ENCODE measurements at regions of chr1 and their contacts with region 1.

Region 1: GRCh38 chr1:40210514-40211204 is 37.1 kb upstream of the TMCO2 start:
- DNase-seq: no peak
- ATAC-seq: no peak
- H3K4me3 ChIP-seq: no peak overlapping the region
- H3K27ac ChIP-seq: no peak overlapping the region
- H3K4me1 ChIP-seq: no peaks in the 10 kb centered on the region
- H3K27me3 ChIP-seq: no peaks in the 10 kb centered on the region
- CTCF ChIP-seq: no peak
- POLR2A ChIP-seq: no peak

Region 2: DNA sequence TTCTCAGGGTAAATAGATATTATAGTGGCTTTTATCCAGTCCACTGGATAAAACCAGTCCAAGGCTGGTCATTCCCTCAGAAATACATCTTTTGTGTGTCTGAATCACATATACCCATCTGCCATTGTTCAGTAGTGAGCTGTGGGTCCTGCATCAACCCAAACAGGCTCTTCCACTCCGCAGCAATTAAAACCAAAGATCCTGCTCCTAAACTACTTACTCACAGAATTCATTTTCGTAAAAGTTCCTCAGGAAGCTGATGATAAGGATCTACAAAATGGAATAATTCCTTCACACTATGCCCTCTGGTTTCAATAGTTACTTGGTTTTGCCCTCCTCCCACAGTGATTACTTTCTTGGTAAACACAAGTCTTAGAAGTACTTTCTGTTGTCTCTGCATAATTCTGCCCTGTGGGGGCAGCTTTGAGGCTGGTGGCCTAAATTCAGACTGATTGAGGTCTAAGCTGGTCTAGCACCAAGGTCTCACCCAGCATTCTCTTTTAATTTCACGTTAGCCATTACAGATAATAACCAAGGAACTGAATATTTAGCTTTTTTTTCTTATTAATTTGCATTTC is 260.7 kb before region 1 on chr1:
- in situ Hi-C with region 1: no loop called
- intact Hi-C with region 1: no loop called
- DNase-seq: no peak
- ATAC-seq: no peak
- H3K4me3 ChIP-seq: no peak overlapping the region
- H3K27ac ChIP-seq: no peak overlapping the region
- H3K4me1 ChIP-seq: peaks cover under 1 to 5% of the 10 kb centered on the region in 2 donors
- H3K27me3 ChIP-seq: no peaks in the 10 kb centered on the region
- CTCF ChIP-seq: no peak
- POLR2A ChIP-seq: no peak

Region 3: GRCh38 chr1:40153073-40153770 is 57.4 kb before region 1 on chr1:
- in situ Hi-C with region 1: no loop called
- intact Hi-C with region 1: no loop called
- DNase-seq: no peak
- ATAC-seq: peak in 1 of 2 donors; percentile 51
- H3K4me3 ChIP-seq: no peak overlapping the region
- H3K27ac ChIP-seq: no peak overlapping the region
- H3K4me1 ChIP-seq: peaks cover 0 to 3% of the 10 kb centered on the region in 2 donors
- H3K27me3 ChIP-seq: no peaks in the 10 kb centered on the region
- CTCF ChIP-seq: peak in 4 of 5 experiments; percentile 14 to 72 (median 58)
- POLR2A ChIP-seq: no peak

Region 4: GRCh38 chr1:40178200-40178599 is 32.5 kb before region 1 on chr1:
- in situ Hi-C with region 1: no loop called
- intact Hi-C with region 1: loop called (anchors 5 kb)
- DNase-seq: no peak
- ATAC-seq: no peak
- H3K4me3 ChIP-seq: no peak overlapping the region
- H3K27ac ChIP-seq: no peak overlapping the region
- H3K4me1 ChIP-seq: peaks cover 22 to 36% of the 10 kb centered on the region in 2 donors
- H3K27me3 ChIP-seq: no peaks in the 10 kb centered on the region
- CTCF ChIP-seq: no peak
- POLR2A ChIP-seq: no peak

Measured in gastrocnemius medialis (tissue), 4 donors.